Body of pancreas (tissue), 4 donors: ENCODE measurements at regions of chr13 and their contacts with region 1.

Region 1: DNA sequence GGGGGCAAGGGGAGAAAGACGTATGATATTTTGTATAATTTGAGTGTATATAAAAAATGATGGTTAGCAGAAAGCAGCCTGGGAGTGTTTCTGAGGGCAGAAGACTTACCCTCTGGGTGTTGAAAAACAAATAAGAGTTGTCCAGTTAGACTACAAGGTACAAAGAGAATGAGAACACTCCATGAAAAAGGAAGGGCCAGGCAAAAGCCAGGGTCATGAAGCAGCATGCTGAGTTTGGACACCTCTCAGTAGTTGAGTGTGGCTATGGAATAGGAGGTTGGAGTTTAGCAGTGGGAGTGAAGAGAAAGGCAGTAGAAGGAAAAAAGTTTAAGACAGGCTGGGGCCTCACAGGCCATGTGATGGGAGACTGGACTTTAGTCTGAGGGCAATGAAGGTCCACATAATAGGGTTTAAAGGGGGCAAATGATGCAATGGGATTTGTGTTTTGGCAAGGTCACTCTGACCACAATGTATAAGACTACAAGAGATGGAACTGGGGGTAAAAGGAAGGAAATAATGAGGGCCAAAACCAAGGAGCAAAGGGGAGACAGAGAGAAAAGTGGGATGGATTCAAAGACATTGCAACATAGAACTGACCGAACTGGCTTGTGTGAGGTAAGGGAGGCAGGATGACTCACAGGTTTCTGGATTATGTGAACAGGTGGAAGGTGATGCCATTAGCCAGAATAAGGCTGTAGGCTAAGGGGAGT is 76.5 kb downstream of the SERP2 start:
- DNase-seq: peak in 1 of 4 donors; percentile 31
- ATAC-seq: peak; percentile 68
- H3K4me3 ChIP-seq: no peak overlapping the region
- H3K27ac ChIP-seq: no peak overlapping the region
- H3K4me1 ChIP-seq: peaks cover 9% of the 10 kb centered on the region
- H3K27me3 ChIP-seq: no peaks in the 10 kb centered on the region
- CTCF ChIP-seq: no peak
- POLR2A ChIP-seq: no peak

Region 2: DNA sequence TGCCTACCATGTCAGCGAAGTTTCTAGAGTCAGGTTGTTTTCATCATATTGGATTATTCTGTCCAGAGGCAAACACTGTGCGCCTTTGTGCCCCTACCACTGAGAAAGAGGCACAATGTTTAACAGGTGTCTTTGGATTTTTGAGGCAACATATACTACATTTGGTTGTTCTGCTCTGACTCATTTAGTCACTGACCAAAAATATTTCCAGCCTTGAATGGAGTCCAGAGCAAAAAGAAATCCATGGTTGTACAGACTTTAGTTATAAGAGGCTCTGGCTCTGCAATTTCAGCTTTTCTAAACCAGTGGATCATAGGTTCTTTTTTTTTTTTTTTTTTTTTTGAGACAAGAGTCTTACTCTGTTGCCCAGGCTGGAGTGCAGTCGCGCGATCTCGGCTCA is 534.7 kb before region 1 on chr13:
- intact Hi-C with region 1: loop called (anchors 10 kb)
- DNase-seq: no peak
- ATAC-seq: no peak
- H3K4me3 ChIP-seq: no peak overlapping the region
- H3K27ac ChIP-seq: no peak overlapping the region
- H3K4me1 ChIP-seq: no peaks in the 10 kb centered on the region
- H3K27me3 ChIP-seq: no peaks in the 10 kb centered on the region
- CTCF ChIP-seq: no peak
- POLR2A ChIP-seq: no peak

Region 3: DNA sequence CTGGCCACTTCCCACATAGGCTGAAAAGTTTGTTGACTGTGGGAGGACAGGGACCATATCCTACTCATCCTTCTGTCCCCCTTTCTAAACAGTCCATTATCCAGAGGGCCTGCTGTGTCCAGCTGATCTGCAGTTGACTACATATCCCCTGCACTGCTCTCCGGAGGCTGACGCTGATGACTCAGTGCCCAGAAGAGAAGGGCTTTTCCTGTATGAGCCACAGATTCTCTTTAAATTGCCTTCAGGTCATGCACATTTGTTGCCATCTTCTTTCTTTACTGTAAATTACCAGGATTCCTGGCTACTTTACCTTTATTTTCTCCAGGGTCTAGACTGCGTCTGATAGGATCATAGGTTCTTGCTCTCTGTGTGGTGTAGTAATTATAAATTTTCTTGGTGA is 445.3 kb before region 1 on chr13:
- intact Hi-C with region 1: no loop called
- DNase-seq: no peak
- ATAC-seq: no peak
- H3K4me3 ChIP-seq: no peak overlapping the region
- H3K27ac ChIP-seq: no peak overlapping the region
- H3K4me1 ChIP-seq: no peaks in the 10 kb centered on the region
- H3K27me3 ChIP-seq: no peaks in the 10 kb centered on the region
- CTCF ChIP-seq: no peak
- POLR2A ChIP-seq: no peak

Region 4: GRCh38 chr13:44508562-44509077 is 58.5 kb after region 1 on chr13:
- intact Hi-C with region 1: no loop called
- DNase-seq: no peak
- ATAC-seq: no peak
- H3K4me3 ChIP-seq: no peak overlapping the region
- H3K27ac ChIP-seq: no peak overlapping the region
- H3K4me1 ChIP-seq: no peaks in the 10 kb centered on the region
- H3K27me3 ChIP-seq: no peaks in the 10 kb centered on the region
- CTCF ChIP-seq: no peak
- POLR2A ChIP-seq: no peak